ENCODE measurements at regions of chr6 and their contacts with region 1.

Region 1: GRCh38 chr6:166297606-166298005 is 10.6 kb downstream of the PRR18 start:
- DNase-seq: peak in 9 of 10 donors; percentile 81 to 96 (median 91)
- H3K4me3 ChIP-seq: peak overlapping the region in 33 of 59 donors; percentile 1 to 52 (median 21)
- H3K27ac ChIP-seq: peak overlapping the region; percentile 77 to 100 (median 98)
- H3K27me3 ChIP-seq: peaks cover 0 to 23% (median 0%) of the 10 kb centered on the region in 45 donors
- CTCF ChIP-seq: peak in 6 of 56 donors; percentile 8 to 42 (median 18)

Region 2: GRCh38 chr6:166308033-166308768 is 10.6 kb after region 1 on chr6 and contains the start of gene PRR18:
- intact Hi-C with region 1: loop called (anchors 1 kb)
- DNase-seq: peak; percentile 29 to 87 (median 81)
- H3K4me3 ChIP-seq: peak within 1 kb of the TSS; percentile 31 to 80 (median 64)
- H3K27ac ChIP-seq: peak within 1 kb of the TSS; percentile 49 to 100 (median 95)
- H3K27me3 ChIP-seq: peaks cover 0 to 42% (median 20%) of the 10 kb centered on the region in 45 donors
- CTCF ChIP-seq: peak in 42 of 56 donors; percentile 11 to 61 (median 41)
- total RNA-seq, gene PRR18: 7.1 to 260 (median 51.2) TPM

Region 3: GRCh38 chr6:166318649-166319600 is 21.3 kb after region 1 on chr6:
- intact Hi-C with region 1: no loop called
- DNase-seq: no peak
- H3K4me3 ChIP-seq: no peak overlapping the region
- H3K27ac ChIP-seq: no peak overlapping the region
- H3K27me3 ChIP-seq: no peaks in the 10 kb centered on the region
- CTCF ChIP-seq: no peak

Region 4: DNA sequence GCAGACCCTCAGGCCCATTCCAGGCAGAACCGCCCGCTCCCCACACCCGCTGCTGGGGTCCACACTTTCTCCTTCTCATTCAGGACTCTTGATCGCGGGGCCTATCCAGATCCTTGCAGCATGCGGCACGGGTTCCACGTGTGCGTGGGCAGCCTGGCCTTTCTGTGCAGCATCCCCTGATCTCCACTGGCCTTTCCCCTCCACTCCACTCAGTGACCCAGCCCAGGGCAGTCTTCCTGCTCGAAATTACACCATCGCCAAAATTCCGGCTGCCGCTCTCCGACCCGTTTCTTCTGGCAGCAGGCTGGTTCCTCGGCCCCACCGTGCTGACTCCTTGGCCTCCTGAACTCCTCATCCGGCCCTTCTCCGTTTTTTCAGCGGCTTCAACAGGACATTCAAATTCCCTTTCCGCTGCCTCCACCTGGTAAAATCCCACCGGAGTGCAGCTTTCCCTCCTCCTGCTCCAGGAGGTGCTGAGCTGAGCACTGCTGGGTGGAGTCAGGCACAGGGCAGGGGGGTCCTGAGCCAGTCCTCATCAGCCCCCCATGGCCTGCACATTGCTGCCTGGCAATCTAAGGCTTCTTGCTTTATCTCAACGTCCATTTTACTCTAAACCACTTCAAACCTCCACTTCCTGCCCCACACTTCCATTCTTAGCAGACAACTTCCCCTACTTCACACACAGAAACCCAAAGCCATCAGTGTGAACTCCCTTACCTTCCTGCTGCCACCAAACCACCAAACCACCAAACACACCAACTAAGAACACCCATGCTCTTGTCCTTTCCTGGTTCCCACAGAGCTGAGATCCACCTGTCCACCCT is 35.8 kb after region 1 on chr6:
- intact Hi-C with region 1: no loop called
- DNase-seq: no peak
- H3K4me3 ChIP-seq: no peak overlapping the region
- H3K27ac ChIP-seq: peak overlapping the region in 35 of 59 donors; percentile 20 to 93 (median 82)
- H3K27me3 ChIP-seq: no peaks in the 10 kb centered on the region
- CTCF ChIP-seq: no peak